ENCODE measurements at regions of chr4 and their contacts with region 1.

Region 1: GRCh38 chr4:38804654-38805295 is at the start of gene TLR1:
- DNase-seq: no peak
- ATAC-seq: peak; percentile 45
- H3K4me3 Mint-ChIP-seq: peak within 1 kb of the TSS; percentile 86
- H3K27ac Mint-ChIP-seq: peak within 1 kb of the TSS; percentile 93
- H3K4me1 Mint-ChIP-seq: peaks cover 68% of the 10 kb centered on the region
- H3K27me3 Mint-ChIP-seq: no peaks in the 10 kb centered on the region
- CTCF ChIP-seq: peak; percentile 54
- total RNA-seq, gene TLR1: 39.6 and 43.0 TPM in 2 replicates

Region 2: DNA sequence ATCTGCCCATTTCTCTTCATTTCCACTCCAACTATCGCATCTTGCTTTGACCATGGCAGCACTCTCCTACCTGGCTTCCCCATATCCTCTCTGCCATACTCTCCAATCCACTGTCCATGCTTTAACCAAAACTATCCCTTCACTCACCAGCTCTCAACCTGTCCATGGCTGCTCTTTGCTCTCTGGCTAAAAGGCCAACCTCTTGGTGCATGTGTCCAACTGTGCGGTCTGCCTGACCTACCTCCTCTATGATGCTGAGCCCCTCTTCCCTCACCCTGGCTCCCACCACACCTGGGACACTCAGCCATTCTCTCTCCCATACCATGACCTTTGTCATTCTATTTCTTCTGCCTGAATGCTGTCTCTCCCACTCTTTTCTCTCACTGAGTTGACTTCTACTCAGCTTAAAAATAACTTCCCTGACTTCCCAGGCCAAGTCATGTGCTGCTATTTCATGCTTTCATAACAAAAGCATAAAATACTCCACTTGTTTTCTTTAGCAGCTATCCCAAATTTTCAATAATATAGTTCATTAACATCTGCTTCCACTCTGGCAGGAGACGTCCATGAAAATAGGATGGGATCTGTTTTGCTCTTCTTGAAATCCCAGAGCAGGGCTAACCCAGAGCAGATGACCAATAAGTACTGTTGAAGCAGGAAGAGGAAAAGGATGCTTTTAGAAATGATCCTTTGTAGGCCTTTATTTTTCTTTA is 170.6 kb before region 1 on chr4:
- CTCF ChIA-PET with region 1: no interaction called
- POLR2A ChIA-PET with region 1: no interaction called
- intact Hi-C with region 1: no loop called
- DNase-seq: no peak
- ATAC-seq: no peak
- H3K4me3 Mint-ChIP-seq: no peak overlapping the region
- H3K27ac Mint-ChIP-seq: no peak overlapping the region
- H3K4me1 Mint-ChIP-seq: peaks cover 3% of the 10 kb centered on the region
- H3K27me3 Mint-ChIP-seq: no peaks in the 10 kb centered on the region
- CTCF ChIP-seq: no peak

Region 3: GRCh38 chr4:38681281-38681991 is 123.3 kb before region 1 on chr4:
- CTCF ChIA-PET with region 1: no interaction called
- POLR2A ChIA-PET with region 1: no interaction called
- intact Hi-C with region 1: no loop called
- DNase-seq: no peak
- ATAC-seq: no peak
- H3K4me3 Mint-ChIP-seq: no peak overlapping the region
- H3K27ac Mint-ChIP-seq: no peak overlapping the region
- H3K4me1 Mint-ChIP-seq: peaks cover 21% of the 10 kb centered on the region
- H3K27me3 Mint-ChIP-seq: no peaks in the 10 kb centered on the region
- CTCF ChIP-seq: no peak

Region 4: DNA sequence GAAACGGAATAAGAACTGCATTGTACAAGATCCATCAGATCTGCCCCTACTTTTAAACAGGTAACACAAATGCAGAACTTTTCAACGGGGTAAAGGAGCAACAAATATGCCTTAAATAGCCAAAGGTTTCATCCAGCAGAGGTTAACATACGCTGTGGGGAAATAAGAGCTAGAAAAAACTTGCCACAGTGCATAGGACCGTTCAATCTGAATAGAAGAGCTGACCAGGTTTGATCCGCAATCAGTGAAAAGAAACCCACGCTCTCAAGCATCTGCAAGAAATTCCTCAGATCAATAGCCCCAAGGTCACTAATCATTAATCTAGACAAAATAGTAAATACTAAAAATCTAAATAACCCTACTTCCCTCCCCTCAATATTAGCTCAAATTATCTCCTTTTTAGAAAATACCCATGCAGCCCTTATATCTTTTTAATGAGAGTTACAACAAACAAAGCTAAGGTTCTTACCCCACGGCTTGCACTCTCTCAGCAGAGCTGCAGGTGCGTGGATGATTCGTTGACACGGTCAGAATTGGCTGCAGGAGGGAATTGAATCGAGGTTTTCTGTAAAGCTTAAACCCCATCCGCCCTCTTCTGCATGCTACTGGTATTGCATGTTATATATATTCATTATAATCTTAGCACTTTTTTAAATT is 22.2 kb before region 1 on chr4 and contains the start of gene TLR10:
- CTCF ChIA-PET with region 1: interaction called, 79 read pairs
- POLR2A ChIA-PET with region 1: interaction called, 89 read pairs
- intact Hi-C with region 1: loop called (anchors 1 kb)
- DNase-seq: no peak
- ATAC-seq: peak; percentile 80
- H3K4me3 Mint-ChIP-seq: peak within 1 kb of the TSS; percentile 100
- H3K27ac Mint-ChIP-seq: peak within 1 kb of the TSS; percentile 98
- H3K4me1 Mint-ChIP-seq: peaks cover 64% of the 10 kb centered on the region
- H3K27me3 Mint-ChIP-seq: no peaks in the 10 kb centered on the region
- CTCF ChIP-seq: no peak
- total RNA-seq, gene TLR10: 92.0 and 107 TPM in 2 replicates

Region 5: GRCh38 chr4:38788327-38788726 is 16.4 kb before region 1 on chr4:
- CTCF ChIA-PET with region 1: interaction called, 17 read pairs
- POLR2A ChIA-PET with region 1: interaction called, 34 read pairs
- intact Hi-C with region 1: loop called (anchors 1 kb)
- DNase-seq: no peak
- ATAC-seq: no peak
- H3K4me3 Mint-ChIP-seq: no peak overlapping the region
- H3K27ac Mint-ChIP-seq: no peak overlapping the region
- H3K4me1 Mint-ChIP-seq: peaks cover 38% of the 10 kb centered on the region
- H3K27me3 Mint-ChIP-seq: no peaks in the 10 kb centered on the region
- CTCF ChIP-seq: no peak

Region 6: DNA sequence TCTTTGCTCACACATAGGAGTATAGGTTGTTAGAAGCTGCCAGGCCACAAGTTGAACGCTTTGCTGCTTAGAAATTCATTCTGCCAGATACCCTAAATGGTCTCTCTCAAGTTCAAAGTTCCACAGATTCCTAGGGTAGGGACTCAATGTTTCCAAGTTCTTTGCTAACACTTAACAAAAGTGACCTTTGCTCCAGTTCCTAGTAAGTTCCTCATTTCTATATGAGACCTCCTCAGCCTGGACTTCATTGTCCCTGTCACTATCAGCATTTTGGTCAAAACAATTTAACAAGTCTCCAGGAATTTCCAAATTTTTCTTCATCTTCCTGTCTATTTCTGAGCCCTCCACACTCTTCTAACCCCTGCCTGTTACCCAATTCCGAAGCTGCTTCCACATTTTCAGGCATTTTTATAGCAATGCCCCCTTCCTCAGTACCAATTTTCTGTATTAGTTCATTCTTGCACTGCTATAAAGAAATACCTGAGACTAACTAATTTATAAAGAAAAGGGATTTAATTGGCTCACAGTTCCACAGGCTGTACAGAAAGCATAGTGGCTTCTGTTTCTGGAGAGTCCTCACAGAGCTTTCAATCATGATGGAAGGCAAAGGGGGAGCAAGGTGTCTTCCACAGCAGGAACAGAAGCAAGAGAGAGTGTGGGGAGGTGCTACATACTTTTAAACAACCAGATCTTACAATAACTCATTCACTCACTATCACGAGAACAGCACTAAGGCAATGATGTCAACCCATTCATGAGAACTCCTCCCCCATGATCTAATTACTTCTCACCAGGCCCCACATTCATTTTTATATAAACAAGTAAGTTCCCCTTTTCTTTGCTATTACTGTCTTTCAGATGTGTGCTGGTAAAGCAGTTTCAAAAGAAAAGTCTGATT is 11.4 kb after region 1 on chr4:
- CTCF ChIA-PET with region 1: interaction called, 12 read pairs
- POLR2A ChIA-PET with region 1: interaction called, 46 read pairs
- intact Hi-C with region 1: loop called (anchors 1 kb)
- DNase-seq: no peak
- ATAC-seq: peak; percentile 74
- H3K4me3 Mint-ChIP-seq: peak overlapping the region; percentile 82
- H3K27ac Mint-ChIP-seq: peak overlapping the region; percentile 94
- H3K4me1 Mint-ChIP-seq: peaks cover 74% of the 10 kb centered on the region
- H3K27me3 Mint-ChIP-seq: no peaks in the 10 kb centered on the region
- CTCF ChIP-seq: no peak

Region 7: DNA sequence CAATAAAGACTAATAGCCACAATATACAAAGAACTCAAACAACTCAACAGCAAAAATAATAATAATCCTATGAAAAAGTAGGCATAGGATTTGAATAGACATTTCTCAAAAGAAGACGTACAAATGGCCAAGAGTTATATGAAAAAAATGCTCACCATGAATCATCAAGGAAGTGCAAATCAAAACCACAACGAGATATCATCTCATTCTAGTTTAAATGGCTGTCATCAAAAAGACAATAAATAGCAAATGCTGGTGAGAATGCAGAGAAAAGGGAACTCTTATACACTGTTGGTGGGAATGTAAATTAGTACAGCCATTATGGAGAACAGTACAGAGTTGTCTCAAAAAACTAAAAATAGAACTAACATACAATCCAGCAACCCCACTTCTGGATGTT is 33.1 kb after region 1 on chr4:
- CTCF ChIA-PET with region 1: interaction called, 4 read pairs
- POLR2A ChIA-PET with region 1: interaction called, 4 read pairs
- intact Hi-C with region 1: loop called (anchors 1 kb)
- DNase-seq: no peak
- ATAC-seq: peak; percentile 40
- H3K4me3 Mint-ChIP-seq: peak overlapping the region; percentile 21
- H3K27ac Mint-ChIP-seq: peak overlapping the region; percentile 60
- H3K4me1 Mint-ChIP-seq: peaks cover 46% of the 10 kb centered on the region
- H3K27me3 Mint-ChIP-seq: no peaks in the 10 kb centered on the region
- CTCF ChIP-seq: no peak

Region 8: DNA sequence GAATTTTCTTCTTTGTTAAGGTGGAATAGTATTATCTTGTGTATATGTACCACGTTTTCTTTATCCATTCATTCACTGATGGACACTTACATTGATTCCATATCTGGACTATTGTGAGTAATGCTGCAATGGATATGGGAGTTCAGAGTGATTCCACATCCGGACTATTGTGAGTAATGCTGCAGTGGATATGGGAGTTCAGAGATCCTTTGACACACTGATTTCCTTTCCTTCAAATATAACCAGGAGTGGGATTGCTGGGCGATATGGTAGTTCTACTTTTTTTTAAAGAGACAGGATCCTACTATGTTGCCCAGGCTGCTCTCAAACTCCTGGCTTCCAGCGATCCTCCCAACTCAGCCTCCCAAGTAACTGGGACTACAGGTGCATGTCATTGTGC is 215.4 kb after region 1 on chr4:
- CTCF ChIA-PET with region 1: no interaction called
- POLR2A ChIA-PET with region 1: no interaction called
- intact Hi-C with region 1: no loop called
- DNase-seq: no peak
- ATAC-seq: no peak
- H3K4me3 Mint-ChIP-seq: no peak overlapping the region
- H3K27ac Mint-ChIP-seq: peak overlapping the region; percentile 43
- H3K4me1 Mint-ChIP-seq: peaks cover 62% of the 10 kb centered on the region
- H3K27me3 Mint-ChIP-seq: no peaks in the 10 kb centered on the region
- CTCF ChIP-seq: no peak

Region 9: DNA sequence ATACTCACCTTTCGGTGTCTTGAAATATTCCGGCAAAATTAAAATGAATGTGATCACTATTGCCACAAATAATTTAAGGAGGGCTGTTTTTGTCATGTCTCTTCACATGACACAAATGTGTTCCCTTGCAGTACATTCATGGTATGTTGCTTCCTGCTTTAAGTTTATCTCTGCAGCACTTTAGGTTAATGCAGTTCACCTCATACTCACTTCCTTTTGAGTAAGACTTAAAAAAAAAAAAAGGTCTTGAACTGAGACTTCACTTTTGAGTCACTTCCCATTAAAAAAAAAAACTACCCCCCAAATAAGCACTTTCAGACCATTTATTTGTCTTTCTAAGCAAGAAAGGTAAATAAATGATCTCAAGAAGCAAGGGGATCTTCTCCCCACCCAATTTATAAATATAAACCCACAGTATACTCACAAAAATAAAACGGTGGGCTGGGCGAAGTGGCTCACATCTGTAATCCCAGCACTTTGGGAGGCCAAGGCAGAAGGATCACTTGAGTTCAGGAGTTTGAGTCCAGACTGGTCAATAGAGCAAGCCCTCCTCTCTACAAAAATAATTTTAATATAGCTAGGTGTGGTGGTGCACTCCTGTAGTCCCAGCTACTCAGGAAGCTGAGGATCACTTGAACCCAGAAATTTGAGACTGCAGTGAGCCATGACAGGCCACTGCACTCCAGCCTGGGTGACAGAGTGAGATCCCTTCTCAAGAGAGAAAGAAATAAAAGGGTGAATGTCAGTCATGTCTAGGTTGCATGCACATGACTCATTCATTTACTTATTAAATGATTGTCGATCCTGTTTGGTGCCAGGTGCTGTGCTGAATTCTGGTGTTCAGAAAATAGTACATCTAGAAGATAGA is 227.7 kb after region 1 on chr4 and contains the start of gene TMEM156:
- CTCF ChIA-PET with region 1: no interaction called
- POLR2A ChIA-PET with region 1: interaction called, 3 read pairs
- intact Hi-C with region 1: loop called (anchors 1 kb)
- DNase-seq: no peak
- ATAC-seq: peak; percentile 69
- H3K4me3 Mint-ChIP-seq: peak within 1 kb of the TSS; percentile 83
- H3K27ac Mint-ChIP-seq: peak within 1 kb of the TSS; percentile 93
- H3K4me1 Mint-ChIP-seq: peaks cover 64% of the 10 kb centered on the region
- H3K27me3 Mint-ChIP-seq: no peaks in the 10 kb centered on the region
- CTCF ChIP-seq: no peak
- total RNA-seq, gene TMEM156: 26.0 and 29.5 TPM in 2 replicates